ENCODE measurements at regions of chr7 and their contacts with region 1.

Region 1: GRCh38 chr7:135170274-135170997 is at the start of gene CYREN:
- DNase-seq: peak; percentile 90 to 94 (median 91)
- H3K4me3 ChIP-seq: peak within 1 kb of the TSS; percentile 70 to 88 (median 70)
- H3K4me3 Mint-ChIP-seq: peak within 1 kb of the TSS; percentile 85 to 92
- H3K27ac ChIP-seq: peak within 1 kb of the TSS; percentile 95 to 96
- H3K27ac Mint-ChIP-seq: peak within 1 kb of the TSS; percentile 90 to 98 (median 96)
- H3K4me1 ChIP-seq: peaks cover 51 to 63% of the 10 kb centered on the region in 2 donors
- H3K4me1 Mint-ChIP-seq: peaks cover 58% of the 10 kb centered on the region
- H3K27me3 ChIP-seq: no peaks in the 10 kb centered on the region
- H3K27me3 Mint-ChIP-seq: peaks cover 0 to 2% (median 1%) of the 10 kb centered on the region in 3 donors
- CTCF ChIP-seq: peak; percentile 76
- polyA plus RNA-seq, gene CYREN: 20.6 to 47.4 (median 40.1) TPM

Region 2: GRCh38 chr7:134986363-134987251 is 183.8 kb before region 1 on chr7 and contains the start of gene AGBL3:
- intact Hi-C with region 1: loop called (anchors 5 kb)
- DNase-seq: peak; percentile 76 to 80 (median 79)
- H3K4me3 ChIP-seq: peak within 1 kb of the TSS; percentile 55 to 87 (median 82)
- H3K4me3 Mint-ChIP-seq: peak within 1 kb of the TSS; percentile 97 to 98
- H3K27ac ChIP-seq: peak within 1 kb of the TSS; percentile 49 to 61
- H3K27ac Mint-ChIP-seq: peak within 1 kb of the TSS; percentile 64 to 94 (median 89)
- H3K4me1 ChIP-seq: peaks cover 9 to 14% of the 10 kb centered on the region in 2 donors
- H3K4me1 Mint-ChIP-seq: peaks cover 15% of the 10 kb centered on the region
- H3K27me3 ChIP-seq: no peaks in the 10 kb centered on the region
- H3K27me3 Mint-ChIP-seq: peaks cover 0 to 2% (median 0%) of the 10 kb centered on the region in 3 donors
- CTCF ChIP-seq: peak; percentile 77
- polyA plus RNA-seq, gene AGBL3: 0.03 to 0.20 (median 0.12) TPM

Region 3: DNA sequence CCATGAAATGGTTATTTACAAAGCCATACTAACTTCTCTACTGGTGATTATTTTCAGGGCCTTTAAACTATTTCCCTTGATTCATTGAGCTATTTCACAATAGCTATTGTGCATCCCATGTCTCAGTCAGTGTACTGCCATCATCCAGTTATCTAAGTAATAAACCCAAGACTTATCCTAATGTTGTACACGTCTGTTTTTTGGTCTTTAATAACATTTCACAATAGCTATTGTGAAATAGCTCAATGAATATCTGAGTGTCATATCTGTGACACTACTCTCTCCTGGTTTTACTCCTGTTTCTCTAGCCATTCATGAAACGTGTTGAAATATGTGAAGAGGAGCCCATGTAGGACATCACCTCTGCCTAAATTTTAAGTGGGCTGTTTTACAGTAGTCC is 59.1 kb before region 1 on chr7:
- intact Hi-C with region 1: loop called in 1 of 2 experiments (anchors 10 kb)
- DNase-seq: peak in 2 of 3 donors; percentile 14 to 17
- H3K4me3 ChIP-seq: no peak overlapping the region
- H3K4me3 Mint-ChIP-seq: no peak overlapping the region
- H3K27ac ChIP-seq: no peak overlapping the region
- H3K27ac Mint-ChIP-seq: no peak overlapping the region
- H3K4me1 ChIP-seq: no peaks in the 10 kb centered on the region
- H3K4me1 Mint-ChIP-seq: no peaks in the 10 kb centered on the region
- H3K27me3 ChIP-seq: no peaks in the 10 kb centered on the region
- H3K27me3 Mint-ChIP-seq: no peaks in the 10 kb centered on the region
- CTCF ChIP-seq: no peak

Region 4: GRCh38 chr7:135128931-135129330 is 41.5 kb before region 1 on chr7:
- intact Hi-C with region 1: no loop called
- DNase-seq: no peak
- H3K4me3 ChIP-seq: no peak overlapping the region
- H3K4me3 Mint-ChIP-seq: no peak overlapping the region
- H3K27ac ChIP-seq: no peak overlapping the region
- H3K27ac Mint-ChIP-seq: no peak overlapping the region
- H3K4me1 ChIP-seq: no peaks in the 10 kb centered on the region
- H3K4me1 Mint-ChIP-seq: no peaks in the 10 kb centered on the region
- H3K27me3 ChIP-seq: no peaks in the 10 kb centered on the region
- H3K27me3 Mint-ChIP-seq: no peaks in the 10 kb centered on the region
- CTCF ChIP-seq: no peak

Region 5: DNA sequence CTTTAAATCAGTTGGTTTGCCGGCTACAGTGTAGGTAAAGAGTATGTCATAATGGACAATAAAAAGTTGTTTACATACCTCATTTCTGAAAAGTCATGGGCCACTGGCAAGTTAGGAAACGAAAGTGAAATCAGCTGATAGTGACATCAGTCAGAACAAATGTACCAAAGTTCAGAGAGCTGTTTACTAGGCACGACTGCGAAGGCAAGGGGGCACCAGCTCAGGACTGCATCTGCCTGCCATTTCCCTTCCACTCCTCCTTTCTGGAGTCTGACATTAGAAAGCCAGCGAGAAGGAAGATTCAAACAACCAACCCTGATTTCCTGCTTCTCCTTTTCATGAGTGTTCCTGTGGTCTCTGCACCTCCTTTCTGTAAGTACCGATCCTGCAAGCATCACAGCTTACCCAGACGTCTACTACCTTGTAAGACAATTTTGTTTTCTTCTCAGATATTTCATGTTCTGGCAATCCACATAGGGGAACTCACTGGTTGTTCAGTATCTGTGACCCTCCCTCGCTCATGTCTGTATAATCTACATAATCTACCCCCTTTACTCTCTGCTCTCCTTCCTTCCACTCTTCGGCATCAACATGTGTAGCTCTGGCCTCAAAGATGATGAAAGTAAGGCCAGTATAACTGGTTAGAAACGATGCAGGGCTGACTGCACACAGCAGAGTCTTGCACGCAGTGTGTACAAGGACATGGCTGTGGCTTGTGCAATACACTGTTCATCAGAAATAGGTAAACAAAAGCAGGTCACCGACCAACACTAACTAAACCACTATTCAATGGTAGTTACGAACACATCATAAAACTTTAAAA is 22.3 kb before region 1 on chr7 and contains the start of gene TMEM140:
- intact Hi-C with region 1: loop called in 1 of 2 experiments (anchors 2 kb)
- DNase-seq: peak; percentile 57 to 63 (median 61)
- H3K4me3 ChIP-seq: peak within 1 kb of the TSS; percentile 68 to 98 (median 81)
- H3K4me3 Mint-ChIP-seq: peak within 1 kb of the TSS; percentile 96
- H3K27ac ChIP-seq: peak within 1 kb of the TSS; percentile 89 to 99
- H3K27ac Mint-ChIP-seq: peak within 1 kb of the TSS; percentile 93 to 99 (median 96)
- H3K4me1 ChIP-seq: peaks cover 52 to 60% of the 10 kb centered on the region in 2 donors
- H3K4me1 Mint-ChIP-seq: peaks cover 61% of the 10 kb centered on the region
- H3K27me3 ChIP-seq: no peaks in the 10 kb centered on the region
- H3K27me3 Mint-ChIP-seq: peaks cover 0 to 2% (median 0%) of the 10 kb centered on the region in 3 donors
- CTCF ChIP-seq: no peak
- polyA plus RNA-seq, gene TMEM140: 2.9 to 14.7 (median 10.6) TPM

Region 6: DNA sequence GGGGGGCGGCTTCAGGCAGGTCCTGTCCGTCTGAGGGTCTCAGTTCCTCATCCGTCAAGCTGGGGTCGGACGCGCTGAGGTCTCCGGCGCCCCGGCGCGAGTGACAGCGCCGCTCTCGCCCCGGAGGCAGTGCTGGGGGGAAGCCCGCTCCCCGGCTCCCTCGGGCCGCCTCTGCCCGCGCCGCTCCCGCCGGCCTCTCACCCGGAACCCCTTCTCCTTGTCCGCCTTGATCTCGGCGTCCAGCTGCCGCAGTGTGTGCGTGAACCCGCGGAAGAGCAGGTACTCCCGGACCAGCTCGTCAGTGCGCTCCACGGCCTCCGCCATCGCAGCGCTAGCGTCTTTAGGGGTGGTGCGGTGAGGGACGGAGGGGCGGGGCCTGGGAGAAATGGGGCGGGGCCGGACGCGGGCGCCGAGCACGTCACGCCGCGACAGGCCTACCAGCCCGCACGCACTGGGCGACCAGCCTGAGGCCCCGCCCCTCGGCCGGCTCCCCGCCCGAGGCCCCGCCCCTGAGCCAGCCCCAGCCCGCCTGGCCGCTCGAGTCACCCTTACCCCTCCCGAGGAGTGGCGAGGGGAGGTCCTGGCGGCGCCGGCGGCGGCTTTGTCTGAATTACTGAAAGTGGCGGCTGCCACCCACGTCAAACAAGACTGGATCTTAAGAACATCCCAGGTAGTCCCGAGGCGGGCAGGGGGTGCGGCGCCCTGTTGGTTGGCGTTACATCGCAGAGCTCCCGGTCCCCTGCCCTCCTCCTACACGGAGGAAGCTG is 40.9 kb after region 1 on chr7 and contains the start of gene WDR91:
- intact Hi-C with region 1: loop called in 1 of 2 experiments (anchors 5 kb)
- DNase-seq: peak; percentile 93
- H3K4me3 ChIP-seq: peak within 1 kb of the TSS; percentile 89 to 90 (median 89)
- H3K4me3 Mint-ChIP-seq: peak within 1 kb of the TSS; percentile 94 to 98
- H3K27ac ChIP-seq: peak within 1 kb of the TSS; percentile 57 to 94
- H3K27ac Mint-ChIP-seq: peak within 1 kb of the TSS; percentile 91 to 99 (median 98)
- H3K4me1 ChIP-seq: peaks cover 44% of the 10 kb centered on the region in 2 donors
- H3K4me1 Mint-ChIP-seq: peaks cover 44% of the 10 kb centered on the region
- H3K27me3 ChIP-seq: no peaks in the 10 kb centered on the region
- H3K27me3 Mint-ChIP-seq: peaks cover 1 to 9% (median 2%) of the 10 kb centered on the region in 3 donors
- CTCF ChIP-seq: no peak
- polyA plus RNA-seq, gene WDR91: 2.5 to 35.0 (median 3.9) TPM

Region 7: GRCh38 chr7:135342887-135343286 is 172.5 kb after region 1 on chr7:
- intact Hi-C with region 1: no loop called
- DNase-seq: no peak
- H3K4me3 ChIP-seq: no peak overlapping the region
- H3K4me3 Mint-ChIP-seq: no peak overlapping the region
- H3K27ac ChIP-seq: no peak overlapping the region
- H3K27ac Mint-ChIP-seq: no peak overlapping the region
- H3K4me1 ChIP-seq: no peaks in the 10 kb centered on the region
- H3K4me1 Mint-ChIP-seq: no peaks in the 10 kb centered on the region
- H3K27me3 ChIP-seq: no peaks in the 10 kb centered on the region
- H3K27me3 Mint-ChIP-seq: peaks cover 2 to 9% (median 7%) of the 10 kb centered on the region in 3 donors
- CTCF ChIP-seq: no peak